ENCODE measurements at regions of chr7 and their contacts with region 1.

Region 1: DNA sequence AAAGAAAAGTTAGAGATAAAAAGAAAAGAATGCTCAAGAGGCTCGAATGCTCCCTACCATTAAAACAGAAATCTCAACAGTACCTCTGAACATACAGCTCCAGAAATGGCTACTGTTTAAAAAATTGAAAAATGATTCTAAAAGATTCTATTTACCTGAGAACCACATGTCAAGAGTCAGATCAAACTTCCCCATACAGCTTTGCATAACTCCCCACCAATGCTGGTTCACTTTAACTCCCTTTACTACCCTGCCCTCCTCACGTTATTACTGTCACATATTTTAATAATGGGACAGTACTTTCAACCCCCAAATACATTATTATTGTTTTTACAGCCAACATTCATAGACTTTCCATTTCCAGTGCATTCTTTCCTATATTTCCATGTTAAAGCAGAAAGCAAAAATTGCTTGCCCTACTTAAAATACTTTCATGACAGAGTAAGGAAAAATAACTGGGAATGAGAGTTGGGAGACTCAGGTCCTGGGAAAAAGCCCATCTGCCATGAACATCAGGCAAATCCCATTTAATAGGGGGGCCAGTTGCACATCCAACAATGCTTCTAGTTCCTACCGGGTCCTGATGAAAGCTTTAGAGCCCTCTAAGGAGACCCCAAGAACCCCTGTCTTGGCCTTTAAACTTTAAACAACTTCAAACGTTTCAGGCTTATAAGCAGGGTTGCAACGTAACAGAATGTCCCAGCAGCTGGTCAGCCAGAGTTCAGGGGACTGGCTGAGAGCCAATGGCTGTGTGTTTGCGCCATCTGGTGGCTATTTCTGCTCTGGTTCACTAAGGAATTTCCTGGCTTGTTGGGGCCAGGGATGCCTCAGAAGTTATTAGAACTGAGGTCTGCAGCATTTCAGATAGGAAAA is 247.4 kb downstream of the ELMO1 start:
- DNase-seq: peak; percentile 64
- H3K4me3 Mint-ChIP-seq: no peak overlapping the region
- H3K27ac Mint-ChIP-seq: no peak overlapping the region
- H3K4me1 Mint-ChIP-seq: peaks cover 2% of the 10 kb centered on the region
- H3K27me3 Mint-ChIP-seq: no peaks in the 10 kb centered on the region

Region 2: DNA sequence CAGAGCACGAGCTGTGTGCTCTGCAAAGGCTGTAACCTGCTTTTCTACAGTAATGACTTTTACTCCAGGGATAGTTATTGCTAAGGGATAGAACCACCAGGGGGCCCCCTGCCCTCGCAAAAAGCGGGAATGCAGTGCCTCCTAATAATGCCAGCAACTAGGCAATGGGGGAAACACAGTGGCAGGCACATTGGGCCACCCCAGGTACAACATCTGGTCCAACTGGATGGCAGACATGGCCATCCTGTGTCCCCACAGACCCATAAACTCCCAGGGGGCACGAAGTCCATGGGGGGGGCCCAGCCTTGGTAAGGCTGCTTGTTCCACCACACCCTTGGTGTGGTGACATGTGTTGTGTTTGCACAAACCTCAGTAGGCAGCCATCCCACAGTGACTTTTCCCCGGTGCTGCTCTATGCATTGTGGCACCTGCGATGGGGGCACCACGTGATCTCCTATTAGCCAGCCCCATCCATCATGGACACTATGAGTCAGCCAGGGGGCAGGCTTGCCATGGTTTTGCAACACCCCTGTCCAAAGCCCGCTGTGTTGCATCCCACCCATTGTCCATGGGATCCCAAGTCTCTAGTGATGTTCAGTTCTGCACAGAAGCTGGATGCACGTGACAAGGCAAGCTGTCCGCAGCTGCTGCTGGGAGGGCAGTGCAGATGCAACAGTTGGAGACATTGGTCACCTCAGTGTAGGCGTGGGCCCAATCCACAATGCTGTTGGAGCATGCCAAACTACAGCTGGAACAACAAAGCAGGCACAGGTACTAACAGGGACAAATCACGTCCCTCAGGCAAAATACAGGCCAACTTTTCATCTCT is 727.6 kb before region 1 on chr7:
- CTCF ChIA-PET with region 1: no interaction called
- intact Hi-C with region 1: loop called (anchors 5 kb)
- DNase-seq: peak; percentile 70
- H3K4me3 Mint-ChIP-seq: no peak overlapping the region
- H3K27ac Mint-ChIP-seq: no peak overlapping the region
- H3K4me1 Mint-ChIP-seq: peaks cover 8% of the 10 kb centered on the region
- H3K27me3 Mint-ChIP-seq: no peaks in the 10 kb centered on the region

Region 3: DNA sequence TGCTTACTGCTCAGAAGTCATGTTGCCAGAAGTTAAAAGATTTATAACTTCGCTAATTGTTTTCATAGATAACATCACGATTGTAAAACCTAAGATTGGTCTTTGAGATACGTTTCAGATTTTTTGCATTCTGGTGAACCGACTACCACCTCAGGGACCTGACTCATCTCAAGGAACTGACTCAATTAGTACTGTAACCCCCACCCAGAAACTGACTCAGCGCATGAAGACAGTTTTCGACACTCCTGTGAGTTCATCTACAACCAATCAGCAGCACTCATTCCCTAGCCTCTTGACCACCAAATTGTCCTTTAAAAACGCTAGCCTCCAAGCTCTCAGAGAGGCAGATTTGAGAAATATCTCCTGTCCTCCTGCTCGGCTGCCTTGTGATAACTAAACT is 175.1 kb after region 1 on chr7:
- CTCF ChIA-PET with region 1: no interaction called
- intact Hi-C with region 1: no loop called
- DNase-seq: peak; percentile 69
- H3K4me3 Mint-ChIP-seq: no peak overlapping the region
- H3K27ac Mint-ChIP-seq: peak overlapping the region; percentile 65
- H3K4me1 Mint-ChIP-seq: peaks cover 68% of the 10 kb centered on the region
- H3K27me3 Mint-ChIP-seq: no peaks in the 10 kb centered on the region